Brain microvascular endothelial cell (primary cell): ENCODE measurements at regions of chr11 and their contacts with region 1.

Region 1: DNA sequence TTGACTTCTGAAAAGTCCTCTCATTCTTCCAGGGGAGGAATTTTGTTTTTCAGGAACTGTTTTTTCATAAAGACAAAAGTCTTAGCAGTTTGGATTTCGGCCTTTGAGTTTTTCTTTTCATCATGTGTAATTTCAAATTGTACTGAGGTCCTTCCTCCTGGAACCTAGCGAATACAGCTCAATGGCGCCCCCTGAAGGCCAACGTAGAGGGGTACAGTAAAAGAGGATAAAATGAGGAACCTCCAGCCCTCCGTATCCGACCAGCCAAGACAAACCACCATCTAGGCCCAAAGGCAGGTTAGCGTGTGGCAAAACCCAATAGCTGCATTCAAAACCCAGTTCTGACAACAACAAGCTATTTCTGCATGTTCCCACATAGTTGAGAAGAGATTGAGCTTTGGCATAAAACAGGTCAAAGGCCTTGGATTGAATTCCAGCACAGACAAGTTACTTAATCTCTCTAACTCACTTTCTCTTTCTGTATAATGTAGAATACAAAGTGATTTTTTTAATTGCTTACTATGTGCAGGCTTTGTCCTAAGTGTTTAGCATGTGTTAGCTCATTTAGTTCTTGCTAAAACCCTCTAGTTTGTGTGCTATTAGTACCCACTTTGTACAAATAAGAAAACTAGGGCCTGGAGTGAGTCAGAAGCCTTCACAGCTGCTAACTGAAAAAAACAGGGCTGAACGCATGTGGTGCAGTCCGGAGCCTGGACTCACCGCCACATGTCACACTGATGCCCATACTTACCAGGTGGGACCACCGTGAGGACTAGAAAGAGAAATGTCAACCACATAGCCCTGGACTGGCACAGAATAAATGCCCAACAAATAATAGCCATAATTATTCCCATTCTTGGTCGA is 43.2 kb upstream of the ETS1 start:
- DNase-seq: peak; percentile 78
- H3K4me3 ChIP-seq: no peak overlapping the region
- H3K27ac ChIP-seq: peak overlapping the region; percentile 17
- H3K27me3 ChIP-seq: no peaks in the 10 kb centered on the region
- CTCF ChIP-seq: peak; percentile 93

Region 2: DNA sequence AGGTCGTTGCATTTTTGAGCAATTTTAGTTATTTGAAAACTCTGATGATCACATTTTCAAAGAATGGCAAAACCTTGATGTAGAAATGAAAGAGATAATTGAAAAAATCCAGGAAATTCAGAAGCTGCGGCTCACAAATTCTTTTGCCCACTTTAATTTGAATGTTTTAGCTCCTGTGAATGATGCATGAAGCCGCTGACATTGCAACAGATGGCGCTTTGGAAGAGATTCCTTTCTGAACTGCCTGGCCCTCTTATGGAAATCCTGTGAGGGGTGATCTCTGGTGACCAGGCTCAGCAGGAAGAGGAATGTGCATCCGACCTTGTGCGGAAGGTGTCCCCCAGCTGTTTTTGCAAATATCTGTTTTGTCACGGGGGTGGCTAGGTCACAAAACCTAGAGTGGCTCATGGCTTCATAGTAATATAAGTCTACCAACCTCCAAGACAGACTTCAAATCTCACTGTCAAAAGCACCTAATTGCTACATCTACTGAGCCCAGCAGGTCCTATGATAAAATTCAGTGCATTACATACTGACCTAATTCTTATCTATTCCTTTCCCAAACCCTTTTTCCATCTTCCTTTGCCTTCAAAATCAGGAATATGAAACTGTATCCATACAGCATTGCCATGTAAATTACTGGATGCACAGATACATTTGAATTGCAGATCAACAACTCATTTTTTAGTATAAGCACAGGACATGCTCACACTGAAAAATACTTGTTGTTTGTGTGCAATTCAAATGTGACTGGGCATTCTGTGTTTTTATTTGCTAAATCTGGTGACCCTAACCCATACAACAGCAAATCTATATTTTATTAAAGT is 455.9 kb before region 1 on chr11:
- in situ Hi-C with region 1: loop called (anchors 5 kb)
- DNase-seq: peak; percentile 62
- H3K4me3 ChIP-seq: no peak overlapping the region
- H3K27ac ChIP-seq: peak overlapping the region; percentile 36
- H3K27me3 ChIP-seq: no peaks in the 10 kb centered on the region
- CTCF ChIP-seq: peak; percentile 26

Region 3: GRCh38 chr11:128290106-128290840 is 340.3 kb before region 1 on chr11:
- in situ Hi-C with region 1: loop called (anchors 25 kb)
- DNase-seq: peak; percentile 78
- H3K4me3 ChIP-seq: no peak overlapping the region
- H3K27ac ChIP-seq: peak overlapping the region; percentile 41
- H3K27me3 ChIP-seq: no peaks in the 10 kb centered on the region
- CTCF ChIP-seq: peak; percentile 80

Region 4: GRCh38 chr11:128506999-128507611 is 123.5 kb before region 1 on chr11:
- in situ Hi-C with region 1: no loop called
- DNase-seq: peak; percentile 93
- H3K4me3 ChIP-seq: peak overlapping the region; percentile 34
- H3K27ac ChIP-seq: peak overlapping the region; percentile 89
- H3K27me3 ChIP-seq: no peaks in the 10 kb centered on the region
- CTCF ChIP-seq: no peak